Mammary epithelial cell (primary cell): ENCODE measurements at regions of chr5 and their contacts with region 1.

Region 1: DNA sequence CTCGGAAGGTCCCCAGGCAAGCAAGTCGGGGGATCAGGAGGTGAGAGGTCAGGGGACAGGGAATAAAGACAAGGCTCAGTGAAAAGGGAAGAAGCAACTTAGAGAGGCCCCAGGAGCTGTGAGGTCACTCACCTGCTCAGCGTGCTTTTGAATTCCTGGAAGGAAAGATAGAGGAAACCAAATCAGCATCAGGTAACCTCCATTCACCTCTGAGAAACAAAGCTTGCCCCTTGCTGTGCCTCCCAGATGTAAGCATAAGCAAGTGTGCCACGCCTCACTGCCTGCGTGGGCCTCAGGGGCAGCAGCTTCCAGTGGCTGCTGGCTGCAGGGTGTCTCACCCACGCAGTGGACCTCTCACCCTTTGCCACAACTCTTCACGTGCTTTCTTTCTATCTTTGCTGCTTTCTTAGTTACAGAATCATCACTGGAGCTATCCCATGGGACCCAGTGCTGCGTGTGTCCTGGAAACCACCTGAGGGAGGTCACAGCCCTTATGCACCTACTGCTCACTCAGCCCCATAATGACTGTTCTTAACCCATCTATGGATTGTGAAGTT is 6.0 kb downstream of the TRIM7 start:
- DNase-seq: no peak
- H3K4me3 ChIP-seq: no peak overlapping the region
- H3K27ac ChIP-seq: no peak overlapping the region
- H3K4me1 ChIP-seq: peaks cover 8% of the 10 kb centered on the region
- H3K27me3 ChIP-seq: no peaks in the 10 kb centered on the region
- CTCF ChIP-seq: no peak

Region 2: DNA sequence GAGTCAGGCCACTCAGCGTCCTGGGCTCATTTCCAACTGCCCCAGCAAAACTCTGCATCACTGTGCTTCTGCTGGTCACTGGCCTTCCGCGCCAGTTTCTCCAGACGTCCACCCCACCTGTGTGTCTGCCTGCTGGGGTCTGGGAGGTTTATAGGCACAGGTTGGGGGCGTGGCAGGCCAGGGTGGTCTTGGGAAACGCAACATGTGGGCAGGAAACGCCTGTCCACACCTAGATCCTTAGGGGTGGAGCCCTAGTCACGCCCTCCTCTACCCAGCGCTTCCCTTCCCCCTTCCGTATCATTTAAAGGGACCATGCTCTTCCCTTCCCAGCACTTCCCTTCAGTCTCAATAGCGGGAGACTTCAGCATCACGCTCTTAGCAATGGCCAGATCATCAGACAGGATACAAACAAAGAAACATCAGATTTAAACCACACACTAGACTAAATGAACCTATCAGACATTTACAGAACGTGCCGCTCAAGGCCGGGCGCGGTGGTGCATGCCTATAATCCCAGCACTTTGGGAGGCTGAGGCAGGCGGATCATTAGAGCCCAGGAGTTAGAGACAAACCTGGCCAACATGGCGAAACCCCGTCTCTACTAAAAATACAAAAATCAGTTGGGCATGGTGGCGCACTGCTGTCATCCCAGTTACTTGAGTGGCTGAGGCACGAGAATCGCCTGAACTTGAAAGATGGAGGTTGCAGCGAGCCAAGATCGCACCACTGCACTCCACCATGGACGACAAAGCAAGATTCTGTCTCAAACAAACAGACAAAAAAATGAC is 170.8 kb before region 1 on chr5:
- CTCF ChIA-PET with region 1: no interaction called
- dilution Hi-C with region 1: no loop called
- in situ Hi-C with region 1: no loop called
- intact Hi-C with region 1: no loop called
- DNase-seq: no peak
- H3K4me3 ChIP-seq: no peak overlapping the region
- H3K27ac ChIP-seq: no peak overlapping the region
- H3K4me1 ChIP-seq: no peaks in the 10 kb centered on the region
- H3K27me3 ChIP-seq: no peaks in the 10 kb centered on the region
- CTCF ChIP-seq: no peak

Region 3: GRCh38 chr5:181114844-181115778 is 83.9 kb before region 1 on chr5:
- CTCF ChIA-PET with region 1: no interaction called
- dilution Hi-C with region 1: no loop called
- in situ Hi-C with region 1: no loop called
- intact Hi-C with region 1: no loop called
- DNase-seq: peak; percentile 68
- H3K4me3 ChIP-seq: peak overlapping the region in 2 of 3 experiments; percentile 31 to 39
- H3K27ac ChIP-seq: no peak overlapping the region
- H3K4me1 ChIP-seq: peaks cover 19% of the 10 kb centered on the region
- H3K27me3 ChIP-seq: no peaks in the 10 kb centered on the region
- CTCF ChIP-seq: no peak

Region 4: GRCh38 chr5:181223058-181223728 is 24.2 kb after region 1 on chr5 and contains the start of gene TRIM41:
- CTCF ChIA-PET with region 1: no interaction called
- dilution Hi-C with region 1: no loop called
- in situ Hi-C with region 1: no loop called
- intact Hi-C with region 1: no loop called
- DNase-seq: peak; percentile 97
- H3K4me3 ChIP-seq: peak within 1 kb of the TSS; percentile 86 to 99 (median 98)
- H3K27ac ChIP-seq: peak within 1 kb of the TSS; percentile 70
- H3K4me1 ChIP-seq: peaks cover 10% of the 10 kb centered on the region
- H3K27me3 ChIP-seq: no peaks in the 10 kb centered on the region
- CTCF ChIP-seq: peak in 1 of 2 donors; percentile 20
- total RNA-seq, gene TRIM41: 10.3 to 30.6 TPM

Region 5: GRCh38 chr5:181234455-181235306 is 35.6 kb after region 1 on chr5:
- CTCF ChIA-PET with region 1: no interaction called
- dilution Hi-C with region 1: loop called (anchors 5 kb)
- in situ Hi-C with region 1: no loop called
- intact Hi-C with region 1: no loop called
- DNase-seq: no peak
- H3K4me3 ChIP-seq: no peak overlapping the region
- H3K27ac ChIP-seq: no peak overlapping the region
- H3K4me1 ChIP-seq: no peaks in the 10 kb centered on the region
- H3K27me3 ChIP-seq: no peaks in the 10 kb centered on the region
- CTCF ChIP-seq: no peak

Region 6: GRCh38 chr5:181261320-181262049 is 62.4 kb after region 1 on chr5:
- CTCF ChIA-PET with region 1: no interaction called
- dilution Hi-C with region 1: no loop called
- in situ Hi-C with region 1: no loop called
- intact Hi-C with region 1: no loop called
- DNase-seq: peak; percentile 64
- H3K4me3 ChIP-seq: peak overlapping the region; percentile 58 to 78 (median 73)
- H3K27ac ChIP-seq: peak overlapping the region; percentile 94
- H3K4me1 ChIP-seq: peaks cover 16% of the 10 kb centered on the region
- H3K27me3 ChIP-seq: no peaks in the 10 kb centered on the region
- CTCF ChIP-seq: peak in 1 of 2 donors; percentile 4